Adrenal gland (tissue), 19 donors: ENCODE measurements at regions of chr3 and their contacts with region 1.

Region 1: DNA sequence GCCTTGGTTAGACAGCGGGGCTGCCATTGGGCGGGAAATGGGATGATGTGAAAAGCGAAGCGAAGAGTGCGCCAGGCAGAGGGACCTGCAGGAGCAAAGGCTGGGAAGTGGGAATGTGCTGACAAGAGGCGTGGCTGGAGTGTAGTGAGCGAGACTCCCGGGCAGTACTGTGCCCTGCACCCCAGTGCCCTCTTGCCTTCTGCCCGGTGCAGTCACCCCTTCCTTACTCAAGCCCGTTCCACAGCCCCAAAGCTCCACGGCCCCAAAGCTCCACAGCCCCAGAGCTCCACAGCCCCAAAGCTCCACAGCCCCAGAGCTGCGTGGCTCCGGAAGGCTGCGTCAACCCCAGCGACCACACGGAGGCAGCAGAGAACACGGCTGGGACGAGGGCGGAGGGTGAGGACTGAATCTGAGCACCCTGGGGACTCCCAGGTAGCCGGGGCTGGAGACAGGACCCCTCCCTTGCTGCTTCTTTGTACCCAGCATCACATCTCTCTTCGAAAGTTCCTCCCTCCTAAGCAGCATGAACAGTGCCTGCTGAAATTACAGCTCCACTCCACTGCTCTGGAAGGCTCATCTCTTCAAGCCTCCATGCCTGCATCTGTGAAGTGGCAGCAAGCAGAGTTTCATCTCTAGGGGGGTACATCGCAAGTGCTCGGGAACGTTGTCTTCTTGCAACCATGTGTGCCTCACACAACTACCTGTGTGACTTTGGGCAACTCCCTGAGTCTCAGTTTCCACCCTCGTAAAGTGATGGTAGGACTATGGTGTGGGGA is 108.9 kb downstream of the FBLN2 start:
- DNase-seq: peak; percentile 27 to 61 (median 47)
- H3K4me3 ChIP-seq: no peak overlapping the region
- H3K27ac ChIP-seq: no peak overlapping the region
- H3K4me1 ChIP-seq: no peaks in the 10 kb centered on the region
- H3K27me3 ChIP-seq: peaks cover 28% of the 10 kb centered on the region
- CTCF ChIP-seq: peak; percentile 48 to 75 (median 64)
- POLR2A ChIP-seq: no peak

Region 2: DNA sequence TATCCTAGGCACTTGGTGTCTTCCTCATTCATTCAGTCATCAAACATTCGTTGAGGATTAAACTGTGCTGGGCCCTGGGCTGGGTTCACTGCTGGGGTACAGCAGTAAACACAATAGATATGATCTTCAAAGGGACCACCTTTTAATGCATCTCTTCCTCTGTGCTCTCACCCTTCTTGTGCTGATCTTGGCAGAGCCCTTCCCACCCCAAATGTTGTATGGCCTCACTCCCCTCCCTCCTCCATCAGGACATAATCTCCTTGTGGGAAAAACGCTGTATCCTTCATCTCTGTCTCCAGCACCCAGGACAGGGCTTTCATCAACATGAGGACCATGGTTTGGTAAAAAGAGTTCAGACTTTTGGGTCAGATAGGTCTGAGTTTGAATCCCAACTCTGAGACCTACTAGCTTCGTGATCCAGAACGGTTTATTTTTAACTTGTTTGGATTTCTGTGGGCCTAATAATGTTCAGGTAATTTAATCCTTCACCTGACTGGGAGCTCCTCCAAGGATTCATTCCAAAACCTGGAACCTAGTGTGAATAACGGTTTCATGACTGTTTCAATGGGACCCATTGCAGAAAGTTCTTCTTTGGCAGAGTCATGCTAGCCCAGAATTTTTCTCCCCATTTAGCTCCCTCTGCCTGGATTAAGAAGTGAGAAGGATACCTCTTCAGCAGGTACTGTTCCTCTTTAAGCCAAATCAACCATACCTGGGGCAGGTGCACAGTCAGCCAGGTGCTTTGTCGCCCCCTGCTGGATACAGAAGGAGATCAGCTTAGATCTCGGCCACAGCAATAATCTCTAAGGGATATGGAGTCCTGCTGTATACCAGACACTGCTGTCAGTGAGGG is 227.2 kb after region 1 on chr3:
- intact Hi-C with region 1: loop called (anchors 5 kb)
- DNase-seq: peak in 3 of 7 donors; percentile 12 to 45 (median 28)
- H3K4me3 ChIP-seq: no peak overlapping the region
- H3K27ac ChIP-seq: no peak overlapping the region
- H3K4me1 ChIP-seq: no peaks in the 10 kb centered on the region
- H3K27me3 ChIP-seq: peaks cover 15% of the 10 kb centered on the region
- CTCF ChIP-seq: peak in 5 of 6 experiments; percentile 16 to 35 (median 33)
- POLR2A ChIP-seq: no peak